Aorta (tissue), 5 donors: ENCODE measurements at regions of chr7 and their contacts with region 1.

Region 1: DNA sequence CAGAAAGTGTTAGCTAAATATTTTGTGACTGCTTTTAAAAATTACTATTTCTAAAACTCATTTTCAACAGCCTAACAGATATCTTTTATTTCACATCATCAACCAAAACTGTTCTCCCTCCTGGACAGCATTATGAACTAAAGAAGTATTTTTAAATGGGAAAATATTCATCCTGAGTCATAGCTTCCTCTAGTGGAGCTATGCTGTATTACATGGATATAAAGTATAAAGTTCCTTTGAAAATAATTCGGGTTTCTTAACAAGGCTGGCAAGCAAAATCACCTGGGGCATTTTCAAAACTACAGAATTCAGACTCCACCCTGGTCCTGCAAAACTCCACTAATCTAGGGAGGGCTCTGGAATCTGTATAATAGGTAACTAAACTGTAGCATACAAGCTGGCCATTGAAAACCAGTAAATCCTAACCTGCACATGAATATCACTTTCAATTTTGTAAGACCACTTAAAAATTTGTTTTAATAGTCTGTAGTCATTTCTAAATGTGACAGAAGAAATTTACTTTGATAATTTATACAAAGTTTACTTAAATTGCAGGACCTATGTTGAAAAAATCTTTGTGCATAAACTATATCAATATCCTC is 53.5 kb downstream of the SCIN start:
- DNase-seq: no peak
- ATAC-seq: no peak
- H3K4me3 ChIP-seq: no peak overlapping the region
- H3K27ac ChIP-seq: no peak overlapping the region
- H3K4me1 ChIP-seq: no peaks in the 10 kb centered on the region
- H3K27me3 ChIP-seq: no peaks in the 10 kb centered on the region

Region 2: DNA sequence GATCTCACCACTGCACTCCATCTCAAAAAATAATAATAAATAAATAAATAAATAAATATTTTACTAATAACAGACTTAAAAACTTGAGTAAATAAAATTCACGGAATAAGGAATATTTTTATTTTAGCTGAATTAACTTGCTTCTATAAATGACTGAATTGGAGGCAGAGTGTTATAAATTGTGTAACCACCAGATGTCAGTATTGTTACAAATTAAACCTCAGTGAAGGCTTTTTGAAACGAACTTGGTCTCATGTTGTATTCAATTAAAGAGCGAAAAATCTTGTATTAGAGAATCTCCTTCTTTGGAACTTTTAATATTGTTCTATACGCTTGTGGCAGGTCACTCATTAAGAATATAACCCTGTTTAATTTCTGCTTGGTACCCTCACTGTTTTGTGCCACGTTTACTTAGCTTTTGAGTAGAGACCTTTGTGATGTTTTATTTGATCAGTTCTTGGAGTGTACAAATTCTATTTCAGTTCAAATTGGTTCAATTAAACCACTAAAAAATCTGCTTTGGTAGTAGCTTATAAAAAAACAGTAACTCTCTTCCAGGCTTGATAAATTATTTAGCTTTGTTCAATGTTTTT is 99.1 kb before region 1 on chr7:
- intact Hi-C with region 1: loop called (anchors 2 to 10 kb)
- DNase-seq: no peak
- ATAC-seq: no peak
- H3K4me3 ChIP-seq: no peak overlapping the region
- H3K27ac ChIP-seq: no peak overlapping the region
- H3K4me1 ChIP-seq: no peaks in the 10 kb centered on the region
- H3K27me3 ChIP-seq: no peaks in the 10 kb centered on the region

Region 3: DNA sequence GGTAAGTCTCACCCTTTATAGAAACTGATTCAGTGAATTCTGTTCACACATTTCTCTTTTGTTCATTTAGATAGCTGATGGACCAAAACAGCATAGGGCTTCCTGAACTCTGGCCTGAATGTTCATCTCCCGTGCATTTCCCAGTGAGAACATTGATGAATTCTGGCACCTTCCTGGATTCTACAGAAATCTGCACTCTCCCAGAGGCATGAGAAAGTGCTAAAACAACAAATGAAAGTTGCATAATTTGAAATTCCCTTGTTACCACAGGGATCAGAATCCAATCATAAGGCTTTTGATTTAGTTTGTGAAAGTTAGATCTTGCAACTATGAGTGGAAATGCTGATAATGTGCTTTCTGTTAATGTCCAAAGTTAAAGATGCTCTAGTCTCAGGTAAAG is 83.1 kb before region 1 on chr7:
- intact Hi-C with region 1: no loop called
- DNase-seq: no peak
- ATAC-seq: no peak
- H3K4me3 ChIP-seq: no peak overlapping the region
- H3K27ac ChIP-seq: no peak overlapping the region
- H3K4me1 ChIP-seq: no peaks in the 10 kb centered on the region
- H3K27me3 ChIP-seq: peaks cover 0 to 2% of the 10 kb centered on the region in 2 donors

Region 4: GRCh38 chr7:12757443-12757842 is 133.4 kb after region 1 on chr7:
- intact Hi-C with region 1: no loop called
- DNase-seq: no peak
- ATAC-seq: peak; percentile 64
- H3K4me3 ChIP-seq: no peak overlapping the region
- H3K27ac ChIP-seq: no peak overlapping the region
- H3K4me1 ChIP-seq: no peaks in the 10 kb centered on the region
- H3K27me3 ChIP-seq: no peaks in the 10 kb centered on the region